Sciatic nerve (tissue), 2 donors: ENCODE measurements at regions of chr4 and their contacts with region 1.

Region 1: GRCh38 chr4:10963958-10964703 is 279.6 kb upstream of the CLNK start:
- DNase-seq: no peak
- ATAC-seq: no peak

Region 2: GRCh38 chr4:10673817-10674369 is 290.2 kb before region 1 on chr4:
- intact Hi-C with region 1: no loop called
- DNase-seq: no peak
- ATAC-seq: no peak

Region 3: DNA sequence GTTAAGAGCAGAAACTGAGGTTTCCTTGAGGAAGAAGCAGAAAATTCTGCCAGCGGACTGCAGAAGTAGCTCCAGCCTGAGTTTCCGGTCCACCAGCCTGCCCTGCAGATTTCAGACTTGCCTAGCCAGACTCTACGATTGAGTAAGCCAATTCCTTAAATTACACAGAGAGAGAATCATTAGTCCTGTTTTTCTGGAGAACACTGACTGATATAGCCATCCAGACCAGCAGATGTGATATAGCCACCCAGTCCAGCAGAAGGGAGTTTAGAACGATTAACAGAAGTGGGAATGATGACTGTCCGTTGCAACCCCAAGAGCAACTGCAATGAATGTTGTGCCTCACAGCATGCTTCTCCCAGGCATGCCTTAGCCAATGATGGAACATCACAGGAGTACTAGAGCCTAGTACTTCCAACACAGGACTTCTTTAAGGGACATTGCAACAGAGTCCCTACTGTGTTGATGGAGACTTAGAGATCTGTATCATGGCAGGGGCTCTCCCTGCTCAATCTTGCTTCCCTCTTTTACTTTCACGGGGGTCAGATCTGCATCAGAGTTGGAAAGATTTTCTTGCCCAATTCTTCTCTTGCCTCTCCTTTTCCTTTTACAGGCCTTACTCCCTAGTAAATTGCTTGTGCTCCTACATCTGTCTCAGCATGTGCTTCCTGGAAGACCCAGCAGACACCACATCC is 14.9 kb before region 1 on chr4:
- intact Hi-C with region 1: loop called (anchors 1 kb)
- DNase-seq: no peak
- ATAC-seq: no peak

Region 4: DNA sequence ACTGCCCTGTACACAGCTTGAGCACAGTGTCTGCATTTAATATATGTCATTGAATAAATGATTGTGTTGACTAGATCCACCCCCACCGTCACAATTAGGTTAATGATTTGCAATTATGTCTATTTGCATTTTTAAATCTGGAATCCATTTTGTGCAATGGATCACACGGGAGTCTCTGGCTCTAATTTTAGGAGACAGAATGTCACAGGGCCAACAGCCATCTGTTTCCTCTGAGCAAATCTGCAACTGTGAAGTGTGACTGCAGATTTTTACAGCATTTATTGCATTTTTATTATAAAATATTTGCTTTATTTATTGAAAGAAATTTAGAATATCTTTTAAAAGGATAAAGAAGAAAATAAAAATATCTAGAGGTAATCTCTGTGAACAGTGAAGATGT is 147.7 kb after region 1 on chr4:
- intact Hi-C with region 1: no loop called
- DNase-seq: no peak
- ATAC-seq: no peak